ENCODE measurements at regions of chr6 and their contacts with region 1.

Region 1: DNA sequence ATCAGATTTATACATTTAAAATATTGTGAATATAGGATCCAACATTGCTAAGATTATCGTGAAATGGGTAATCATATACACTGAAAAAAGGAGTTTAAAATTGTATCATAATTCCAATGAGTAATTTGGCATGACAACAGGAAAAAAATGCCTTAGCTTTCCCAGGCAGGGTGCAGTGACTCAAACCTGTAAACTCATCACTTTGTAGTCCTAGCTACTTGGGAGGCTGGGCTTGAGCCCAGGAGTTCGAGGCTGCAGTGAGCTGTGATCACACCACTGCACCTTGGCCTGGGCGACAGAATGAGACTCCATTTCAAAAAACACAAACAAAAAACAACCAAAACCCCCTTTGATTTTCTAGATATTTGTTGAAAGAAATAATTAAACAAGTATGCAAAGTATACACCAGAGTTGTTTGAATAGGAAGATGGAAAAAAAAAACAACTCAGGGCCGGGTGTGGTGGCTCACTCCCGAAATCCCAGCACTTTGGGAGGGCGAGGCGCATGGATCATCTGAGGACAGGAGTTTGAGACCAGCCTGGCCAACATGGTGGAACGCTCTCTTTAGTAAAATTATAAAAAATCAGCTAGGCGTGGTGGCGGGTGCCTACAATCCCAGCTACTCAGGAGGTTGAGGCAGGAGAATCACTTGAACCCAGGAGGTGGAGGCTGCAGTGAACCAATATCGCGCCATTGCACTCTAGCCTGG is 98.7 kb downstream of the TRERF1 start:
- DNase-seq: no peak
- H3K4me3 Mint-ChIP-seq: no peak overlapping the region
- H3K27ac Mint-ChIP-seq: no peak overlapping the region
- H3K4me1 Mint-ChIP-seq: peaks cover 31% of the 10 kb centered on the region
- H3K27me3 Mint-ChIP-seq: no peaks in the 10 kb centered on the region

Region 2: DNA sequence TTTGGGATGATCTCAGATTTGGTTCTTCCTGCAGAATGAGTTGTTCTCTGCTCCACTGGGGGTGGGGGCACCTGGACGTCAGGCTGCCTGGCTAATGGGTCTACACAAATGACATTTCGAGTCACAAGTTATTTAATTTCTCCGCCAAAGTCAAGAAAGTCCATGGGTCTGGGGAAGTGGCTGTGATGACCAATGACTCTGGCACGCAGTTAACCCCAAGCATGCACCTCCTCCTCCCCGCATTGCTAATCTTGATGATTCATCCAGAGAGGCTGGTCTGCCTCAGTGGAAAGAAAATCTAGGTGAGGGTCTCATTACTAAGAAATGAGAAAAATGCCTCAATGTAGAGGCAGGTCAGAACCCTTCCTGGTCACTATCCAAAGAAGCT is 37.0 kb before region 1 on chr6:
- intact Hi-C with region 1: loop called (anchors 1 kb)
- DNase-seq: no peak
- H3K4me3 Mint-ChIP-seq: no peak overlapping the region
- H3K27ac Mint-ChIP-seq: peak overlapping the region; percentile 80
- H3K4me1 Mint-ChIP-seq: peaks cover 72% of the 10 kb centered on the region
- H3K27me3 Mint-ChIP-seq: no peaks in the 10 kb centered on the region

Region 3: GRCh38 chr6:42383421-42384205 is 30.6 kb after region 1 on chr6:
- intact Hi-C with region 1: loop called (anchors 1 kb)
- DNase-seq: no peak
- H3K4me3 Mint-ChIP-seq: peak overlapping the region; percentile 38
- H3K27ac Mint-ChIP-seq: peak overlapping the region; percentile 83
- H3K4me1 Mint-ChIP-seq: peaks cover 71% of the 10 kb centered on the region
- H3K27me3 Mint-ChIP-seq: no peaks in the 10 kb centered on the region

Region 4: DNA sequence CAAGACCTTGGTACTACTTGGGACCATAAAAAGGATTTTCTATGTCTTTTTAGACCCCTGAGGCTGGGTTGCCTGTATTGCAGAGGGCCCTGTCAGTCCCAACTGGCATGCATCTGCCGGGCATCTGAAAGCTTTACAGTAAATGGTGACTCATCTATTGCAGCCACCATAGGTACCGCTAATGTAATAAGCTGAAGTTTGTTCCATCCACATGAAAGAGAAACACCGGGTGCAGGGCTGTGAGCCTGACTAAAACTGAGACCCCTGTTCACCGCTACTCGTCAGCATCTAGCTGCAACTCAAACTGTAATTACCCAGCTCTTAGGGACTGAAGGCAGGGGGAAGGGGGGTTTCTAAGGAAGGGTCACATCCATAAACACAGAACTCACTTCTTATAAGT is 49.2 kb after region 1 on chr6:
- intact Hi-C with region 1: loop called (anchors 1 kb)
- DNase-seq: peak; percentile 66
- H3K4me3 Mint-ChIP-seq: peak overlapping the region; percentile 68
- H3K27ac Mint-ChIP-seq: peak overlapping the region; percentile 87
- H3K4me1 Mint-ChIP-seq: peaks cover 82% of the 10 kb centered on the region
- H3K27me3 Mint-ChIP-seq: no peaks in the 10 kb centered on the region

Region 5: DNA sequence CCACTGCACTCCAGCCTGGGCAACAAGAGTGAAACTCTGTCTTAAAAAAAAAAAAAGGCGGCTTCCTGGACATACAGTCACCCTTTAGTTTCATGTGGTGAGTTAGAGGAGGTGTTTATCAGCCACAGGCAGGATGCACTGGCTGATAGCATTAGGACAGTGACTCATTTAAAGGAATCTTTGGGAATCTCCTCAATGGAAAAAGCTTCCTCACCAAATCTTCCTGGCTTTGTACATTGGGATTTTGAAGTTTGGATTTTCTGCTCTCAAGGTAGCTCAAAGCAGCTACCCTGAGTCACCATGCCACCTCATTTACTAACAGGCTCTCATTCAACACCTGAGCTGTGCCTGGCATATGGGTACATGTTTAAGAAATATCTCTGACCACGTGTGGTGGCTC is 349.2 kb after region 1 on chr6:
- intact Hi-C with region 1: no loop called
- DNase-seq: no peak
- H3K4me3 Mint-ChIP-seq: no peak overlapping the region
- H3K27ac Mint-ChIP-seq: no peak overlapping the region
- H3K4me1 Mint-ChIP-seq: no peaks in the 10 kb centered on the region
- H3K27me3 Mint-ChIP-seq: no peaks in the 10 kb centered on the region

Measured in activated T-helper 1 cell treated with anti-CD3 and anti-CD28 coated beads, Interleukin-12 subunit alpha, Interleukin-12 subunit beta, Interleukin-2, Interleukin-4 antibody, amounts not matched to agents 30 ng/mL and 10 ng/mL and 1 ng/mL, durations not matched to agents 14 hours and 24 hours and 36 hours (primary cell).